Lower leg skin (tissue), 4 donors: ENCODE measurements at regions of chr4 and their contacts with region 1.

Region 1: GRCh38 chr4:173013232-173013930 is 155.2 kb upstream of the GALNT7 start:
- DNase-seq: peak in 1 of 2 donors; percentile 19
- H3K4me3 ChIP-seq: no peak overlapping the region
- CTCF ChIP-seq: no peak
- POLR2A ChIP-seq: no peak

Region 2: GRCh38 chr4:173252024-173252935 is 238.9 kb after region 1 on chr4:
- intact Hi-C with region 1: loop called (anchors 5 kb)
- DNase-seq: peak in 1 of 2 donors; percentile 48
- H3K4me3 ChIP-seq: no peak overlapping the region
- CTCF ChIP-seq: no peak
- POLR2A ChIP-seq: no peak